Mammary epithelial cell (primary cell): ENCODE measurements at regions of chr5 and their contacts with region 1.

Region 1: GRCh38 chr5:159581502-159582249 is 251.4 kb upstream of the IL12B start:
- DNase-seq: peak; percentile 97
- H3K4me3 ChIP-seq: no peak overlapping the region
- H3K27ac ChIP-seq: peak overlapping the region; percentile 97
- H3K4me1 ChIP-seq: peaks cover 26% of the 10 kb centered on the region
- H3K27me3 ChIP-seq: no peaks in the 10 kb centered on the region
- CTCF ChIP-seq: peak; percentile 28 to 36

Region 2: GRCh38 chr5:159331093-159331973 is 250.3 kb before region 1 on chr5:
- CTCF ChIA-PET with region 1: no interaction called
- dilution Hi-C with region 1: no loop called
- in situ Hi-C with region 1: no loop called
- intact Hi-C with region 1: loop called (anchors 2 kb)
- DNase-seq: no peak
- H3K4me3 ChIP-seq: peak overlapping the region; percentile 37 to 56 (median 45)
- H3K27ac ChIP-seq: no peak overlapping the region
- H3K4me1 ChIP-seq: peaks cover 9% of the 10 kb centered on the region
- H3K27me3 ChIP-seq: no peaks in the 10 kb centered on the region
- CTCF ChIP-seq: peak; percentile 56 to 83

Region 3: DNA sequence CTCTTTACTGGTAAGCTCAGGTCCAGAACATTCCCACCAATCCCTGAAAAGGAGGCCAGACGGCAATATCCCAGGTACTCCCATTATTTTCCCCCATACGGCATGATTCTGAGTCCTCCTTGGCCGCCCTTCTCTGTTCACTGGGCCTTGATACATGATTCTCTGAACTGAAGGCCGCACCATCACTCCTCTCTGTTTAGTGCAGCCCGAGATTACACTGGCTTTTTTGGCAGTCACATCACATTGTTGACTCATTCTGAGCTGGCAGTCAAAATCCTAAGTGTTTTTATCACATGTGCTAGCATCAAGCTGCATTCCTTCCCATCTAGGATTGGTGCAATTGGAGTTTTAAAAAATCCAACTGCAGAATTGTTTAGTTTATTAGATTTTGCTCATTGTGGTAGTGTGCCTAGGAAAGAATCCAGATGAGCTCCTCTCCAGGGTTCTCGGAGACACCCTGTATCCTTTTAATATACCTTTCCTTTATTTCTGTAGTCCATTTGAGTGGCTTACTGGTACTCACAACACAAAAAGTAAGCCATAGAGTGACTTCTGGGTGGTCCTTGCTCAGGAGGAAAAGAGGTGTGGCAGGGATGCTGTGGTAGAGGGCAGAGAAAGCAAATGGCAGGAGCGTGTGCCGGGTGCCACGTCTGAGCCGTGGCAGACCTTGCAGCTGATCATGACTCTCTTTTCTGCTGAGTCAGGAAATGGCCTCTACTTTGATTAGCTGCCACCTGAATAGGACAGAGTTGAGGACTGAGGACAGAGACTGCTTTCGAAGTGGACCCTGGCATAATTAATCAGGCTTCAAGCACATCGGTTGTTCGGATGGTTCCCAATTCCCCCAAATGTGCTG is 130.3 kb before region 1 on chr5:
- CTCF ChIA-PET with region 1: no interaction called
- dilution Hi-C with region 1: no loop called
- in situ Hi-C with region 1: no loop called
- intact Hi-C with region 1: loop called (anchors 2 kb)
- DNase-seq: peak; percentile 84
- H3K4me3 ChIP-seq: no peak overlapping the region
- H3K27ac ChIP-seq: no peak overlapping the region
- H3K4me1 ChIP-seq: peaks cover 18% of the 10 kb centered on the region
- H3K27me3 ChIP-seq: no peaks in the 10 kb centered on the region
- CTCF ChIP-seq: no peak

Region 4: DNA sequence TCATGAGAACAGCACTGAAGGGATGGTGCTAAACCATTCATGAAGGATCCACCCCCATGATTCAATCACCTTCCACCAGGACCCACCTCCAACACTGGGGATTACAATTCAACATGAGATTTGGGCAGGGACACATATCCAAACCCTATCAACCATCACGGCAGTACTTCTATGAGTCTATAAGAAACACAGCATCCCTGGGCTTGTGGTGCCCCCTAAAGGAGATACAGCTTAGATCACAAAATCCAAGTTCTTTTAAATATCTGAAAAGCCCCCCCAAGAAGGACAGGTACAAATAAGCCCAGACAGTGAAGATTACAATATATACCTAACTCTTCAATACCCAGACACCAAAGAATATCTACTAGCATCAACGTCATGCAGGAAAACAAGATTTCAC is 100.9 kb after region 1 on chr5:
- CTCF ChIA-PET with region 1: no interaction called
- dilution Hi-C with region 1: no loop called
- in situ Hi-C with region 1: no loop called
- intact Hi-C with region 1: loop called (anchors 5 kb)
- DNase-seq: no peak
- H3K4me3 ChIP-seq: no peak overlapping the region
- H3K27ac ChIP-seq: no peak overlapping the region
- H3K4me1 ChIP-seq: no peaks in the 10 kb centered on the region
- H3K27me3 ChIP-seq: no peaks in the 10 kb centered on the region
- CTCF ChIP-seq: no peak

Region 5: DNA sequence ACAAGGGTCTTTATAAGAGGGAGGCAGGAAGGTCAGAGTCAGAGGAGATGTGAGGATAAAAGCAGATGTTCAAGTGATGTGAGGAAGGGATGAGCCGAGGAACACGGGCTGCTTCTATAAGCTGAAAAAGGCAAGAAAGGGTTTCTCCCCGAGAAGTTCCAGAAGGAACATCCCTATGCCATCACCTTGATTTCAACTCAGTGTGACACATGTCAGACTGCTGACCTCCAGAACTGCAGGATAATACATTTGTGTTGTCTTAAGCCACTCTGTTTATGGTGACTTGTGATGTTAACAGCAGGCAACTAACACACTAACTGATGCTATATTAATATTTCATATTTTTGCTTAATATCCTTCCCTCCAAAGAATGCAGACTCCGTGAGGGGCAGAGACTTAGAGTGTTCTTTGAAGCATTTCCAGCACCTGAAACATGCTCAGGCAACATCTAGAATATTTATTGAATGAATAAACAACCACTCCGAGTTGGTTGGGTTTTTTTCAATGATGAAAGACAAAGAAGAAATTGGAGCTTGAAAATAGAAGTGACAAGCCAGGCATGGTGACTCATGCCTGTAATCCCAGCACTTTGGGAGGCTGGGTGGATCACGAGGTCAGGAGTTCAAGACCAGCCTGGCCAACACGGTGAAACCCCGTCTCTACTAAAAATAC is 257.0 kb after region 1 on chr5:
- CTCF ChIA-PET with region 1: no interaction called
- dilution Hi-C with region 1: no loop called
- in situ Hi-C with region 1: no loop called
- intact Hi-C with region 1: loop called (anchors 5 kb)
- DNase-seq: peak; percentile 89
- H3K4me3 ChIP-seq: no peak overlapping the region
- H3K27ac ChIP-seq: peak overlapping the region; percentile 34
- H3K4me1 ChIP-seq: peaks cover 30% of the 10 kb centered on the region
- H3K27me3 ChIP-seq: no peaks in the 10 kb centered on the region
- CTCF ChIP-seq: no peak

Region 6: DNA sequence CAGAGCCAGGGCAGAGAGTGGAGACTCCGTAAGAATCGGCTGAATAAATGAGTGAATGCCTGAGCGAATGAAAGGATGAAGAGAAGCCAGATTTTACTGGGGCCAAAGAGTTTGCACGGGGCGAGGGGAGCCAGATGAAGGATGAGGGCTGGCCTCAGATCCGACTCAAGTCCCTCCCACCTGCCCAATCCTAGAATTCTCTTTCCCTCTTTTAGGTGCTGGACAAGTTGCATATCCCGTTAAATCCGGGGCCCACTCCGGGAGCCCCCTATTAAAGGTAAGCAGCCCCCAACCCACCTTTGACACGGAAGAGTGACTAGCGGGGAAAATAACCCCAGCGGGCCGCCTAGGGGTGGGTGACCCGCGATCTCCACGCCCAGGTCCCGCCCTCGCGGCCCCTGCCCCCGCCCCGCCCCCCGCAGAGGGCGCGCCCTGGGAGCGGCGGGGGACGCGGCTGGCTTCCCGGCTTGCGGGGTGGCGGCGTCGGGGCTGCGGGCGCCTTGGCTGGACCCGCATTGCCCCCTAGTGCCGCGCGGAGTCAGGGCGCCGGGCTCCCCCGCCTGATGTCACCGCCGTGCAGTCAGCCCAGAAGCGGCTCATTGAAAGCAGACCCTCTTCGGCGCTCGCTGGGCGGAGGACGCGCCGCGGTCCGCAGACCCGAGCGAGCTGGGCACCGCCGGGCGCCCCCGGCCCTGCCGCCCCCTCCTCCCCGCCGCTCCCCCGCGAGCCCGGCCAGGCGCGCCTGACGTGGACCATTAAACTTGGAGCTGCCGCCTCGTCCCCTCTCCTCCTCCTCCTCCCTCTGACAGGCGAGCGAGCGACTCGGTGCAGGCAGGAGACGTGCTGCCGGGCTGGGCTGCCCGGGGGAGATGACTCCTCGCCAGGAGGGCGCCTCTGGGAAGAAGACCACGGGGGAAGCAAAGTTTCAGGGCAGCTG is 334.5 kb after region 1 on chr5 and contains the start of gene ADRA1B:
- CTCF ChIA-PET with region 1: interaction called, 9 read pairs
- dilution Hi-C with region 1: no loop called
- in situ Hi-C with region 1: loop called in 1 of 2 experiments (anchors 25 kb)
- intact Hi-C with region 1: loop called (anchors 1 kb)
- DNase-seq: peak; percentile 41
- H3K4me3 ChIP-seq: peak within 1 kb of the TSS; percentile 12 to 41 (median 33)
- H3K27ac ChIP-seq: no peak within 1 kb of the TSS
- H3K4me1 ChIP-seq: peaks cover 49% of the 10 kb centered on the region
- H3K27me3 ChIP-seq: no peaks in the 10 kb centered on the region
- CTCF ChIP-seq: peak; percentile 36 to 65
- total RNA-seq, gene ADRA1B: 0.67 to 0.80 TPM